CD8-positive, alpha-beta T cell (primary cell): ENCODE measurements at regions of chr22 and their contacts with region 1.

Region 1: GRCh38 chr22:20829491-20830134 is 29.0 kb downstream of the PI4KA start:
- DNase-seq: no peak
- ATAC-seq: no peak
- H3K4me3 ChIP-seq: no peak overlapping the region
- H3K4me3 Mint-ChIP-seq: no peak overlapping the region
- H3K27ac ChIP-seq: no peak overlapping the region
- H3K27ac Mint-ChIP-seq: no peak overlapping the region
- H3K4me1 ChIP-seq: no peaks in the 10 kb centered on the region
- H3K4me1 Mint-ChIP-seq: no peaks in the 10 kb centered on the region
- H3K27me3 ChIP-seq: no peaks in the 10 kb centered on the region
- H3K27me3 Mint-ChIP-seq: no peaks in the 10 kb centered on the region
- CTCF ChIP-seq: no peak

Region 2: DNA sequence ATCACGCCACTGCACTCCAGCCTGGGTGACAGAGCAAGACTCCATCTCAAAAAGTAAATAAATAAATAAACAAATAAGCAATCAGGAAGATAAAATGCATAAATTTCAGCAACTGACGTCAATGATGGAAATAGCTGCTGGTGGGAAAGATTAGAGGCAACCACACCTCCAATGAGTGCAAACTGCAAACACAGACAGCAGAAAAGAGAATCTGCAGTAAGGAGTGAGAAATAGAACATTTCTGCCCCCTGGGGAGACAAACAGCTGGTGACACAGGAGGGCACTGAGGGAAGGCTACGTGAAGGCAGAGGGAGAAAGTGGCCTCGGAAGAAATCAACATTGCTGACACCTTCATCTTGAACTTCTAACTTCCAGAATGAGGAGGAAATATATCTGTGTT is 22.5 kb after region 1 on chr22:
- CTCF ChIA-PET with region 1: interaction called, 3 read pairs
- POLR2A ChIA-PET with region 1: no interaction called
- intact Hi-C with region 1: loop called in 1 of 2 experiments (anchors 2 kb)
- DNase-seq: no peak
- ATAC-seq: no peak
- H3K4me3 ChIP-seq: no peak overlapping the region
- H3K4me3 Mint-ChIP-seq: no peak overlapping the region
- H3K27ac ChIP-seq: no peak overlapping the region
- H3K27ac Mint-ChIP-seq: peak overlapping the region; percentile 37
- H3K4me1 ChIP-seq: peaks cover 24% of the 10 kb centered on the region
- H3K4me1 Mint-ChIP-seq: peaks cover 58% of the 10 kb centered on the region
- H3K27me3 ChIP-seq: no peaks in the 10 kb centered on the region
- H3K27me3 Mint-ChIP-seq: no peaks in the 10 kb centered on the region
- CTCF ChIP-seq: no peak